ENCODE measurements at regions of chr1 and their contacts with region 1.

Region 1: DNA sequence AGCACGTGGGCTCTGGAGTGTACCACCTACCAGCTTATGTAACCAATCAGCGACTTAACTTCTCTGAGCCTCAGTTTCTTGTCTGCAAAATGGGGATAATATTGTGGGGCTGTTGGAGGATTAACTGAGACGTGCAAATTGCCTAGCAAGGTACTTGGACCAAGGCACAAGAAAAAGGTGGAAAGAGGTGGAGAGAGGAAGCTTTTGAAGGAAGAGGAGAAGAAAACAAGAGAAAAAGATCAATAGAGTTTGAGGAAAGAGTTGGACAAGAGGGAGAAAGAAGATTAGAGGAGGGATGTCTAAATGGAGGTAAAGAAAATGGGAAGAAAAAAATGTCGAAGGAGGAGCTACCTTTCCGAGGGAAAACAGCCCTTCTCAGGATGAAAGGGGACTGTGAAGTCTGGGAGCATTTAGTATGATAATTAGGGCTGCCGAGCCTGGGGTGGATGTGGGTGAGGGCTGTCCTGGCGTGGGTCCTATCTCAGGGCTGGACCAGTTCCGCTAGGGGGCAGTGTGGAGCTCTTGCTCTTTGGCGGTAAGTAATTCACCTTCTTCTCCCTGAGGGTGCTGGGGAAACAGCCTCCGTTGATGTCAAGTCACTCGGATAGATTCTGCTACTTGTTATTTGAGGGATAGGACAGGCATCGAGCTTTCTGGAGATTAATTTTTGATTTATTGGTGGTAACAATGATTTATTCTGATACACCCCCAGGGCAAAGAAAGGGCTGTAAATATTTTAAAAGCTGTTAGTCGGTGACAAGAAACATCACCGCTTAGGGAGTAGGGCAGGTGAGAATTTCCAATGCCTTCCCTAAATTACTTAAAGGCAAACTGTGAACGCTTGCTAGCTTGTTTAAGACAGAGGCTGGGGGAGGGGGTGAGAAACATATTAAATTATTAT is 79.0 kb upstream of the NFASC start:
- DNase-seq: peak; percentile 86
- H3K4me3 Mint-ChIP-seq: no peak overlapping the region
- H3K27ac Mint-ChIP-seq: no peak overlapping the region
- H3K4me1 Mint-ChIP-seq: no peaks in the 10 kb centered on the region
- H3K27me3 Mint-ChIP-seq: peaks cover 23% of the 10 kb centered on the region

Region 2: DNA sequence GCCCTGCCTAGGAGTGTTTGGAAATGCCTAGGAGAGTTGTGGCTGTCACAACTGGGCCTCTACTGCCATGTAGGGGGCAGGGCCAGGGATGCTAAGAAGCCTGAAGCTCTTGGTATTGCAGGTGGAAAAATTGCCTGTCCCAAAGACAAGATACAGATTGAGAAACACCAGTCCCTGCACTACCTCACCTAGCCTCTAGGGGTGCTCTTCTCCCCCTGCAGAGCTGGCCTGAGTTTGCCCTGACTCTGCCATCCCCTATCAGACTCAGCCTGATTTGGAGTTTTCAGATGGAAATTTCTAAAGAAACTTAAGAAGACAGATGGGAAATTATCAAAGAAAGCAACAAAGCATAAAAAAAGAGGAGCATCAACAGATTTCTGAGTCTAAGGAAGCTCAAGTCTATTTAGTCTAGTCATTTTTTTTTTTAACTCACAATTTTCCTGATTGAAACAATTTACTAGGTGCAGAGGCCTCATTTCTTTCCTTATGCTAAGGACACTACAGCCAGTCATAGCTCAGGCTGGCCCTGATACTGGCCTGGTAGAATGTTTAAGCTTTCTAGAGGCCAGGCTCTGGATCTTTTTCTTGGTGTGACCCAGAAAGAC is 44.8 kb before region 1 on chr1:
- CTCF ChIA-PET with region 1: interaction called, 10 read pairs
- POLR2A ChIA-PET with region 1: no interaction called
- intact Hi-C with region 1: no loop called
- DNase-seq: peak; percentile 62
- H3K4me3 Mint-ChIP-seq: no peak overlapping the region
- H3K27ac Mint-ChIP-seq: no peak overlapping the region
- H3K4me1 Mint-ChIP-seq: no peaks in the 10 kb centered on the region
- H3K27me3 Mint-ChIP-seq: peaks cover 23% of the 10 kb centered on the region

Region 3: DNA sequence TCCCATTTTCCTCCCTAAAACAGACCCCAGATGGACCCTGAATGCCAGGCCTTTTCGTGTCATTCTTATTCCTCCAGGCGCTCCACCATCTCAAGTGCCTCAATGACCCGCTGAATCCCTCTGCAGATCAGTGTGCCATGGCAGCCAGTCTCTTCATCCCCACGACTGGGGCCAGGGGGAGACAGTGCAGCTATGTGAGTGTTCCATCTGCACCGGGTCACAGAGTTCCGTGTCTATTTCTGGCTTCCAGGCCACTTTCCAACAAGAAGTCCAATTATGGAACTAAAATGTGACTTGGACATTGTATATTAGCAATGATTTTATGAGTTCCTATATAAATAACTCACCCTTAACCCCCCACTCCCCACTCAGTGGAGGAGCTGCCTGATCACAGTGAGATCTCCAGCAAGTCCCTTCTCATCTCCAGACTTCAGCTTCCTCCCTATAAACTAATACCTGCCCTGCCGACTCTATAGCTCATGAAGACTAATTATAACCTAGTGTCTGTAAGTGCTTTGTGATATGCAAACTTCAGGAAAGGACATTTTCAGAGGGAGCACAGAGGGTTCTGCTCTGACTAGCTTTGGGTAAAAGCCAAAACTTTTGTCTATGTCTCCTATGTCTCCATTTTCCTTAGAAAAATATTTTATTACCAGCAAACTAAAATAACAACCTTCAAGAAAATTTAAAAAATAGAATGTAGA is 22.6 kb after region 1 on chr1:
- CTCF ChIA-PET with region 1: interaction called, 16 read pairs
- POLR2A ChIA-PET with region 1: no interaction called
- intact Hi-C with region 1: no loop called
- DNase-seq: no peak
- H3K4me3 Mint-ChIP-seq: no peak overlapping the region
- H3K27ac Mint-ChIP-seq: no peak overlapping the region
- H3K4me1 Mint-ChIP-seq: no peaks in the 10 kb centered on the region
- H3K27me3 Mint-ChIP-seq: peaks cover 25% of the 10 kb centered on the region

Region 4: GRCh38 chr1:205255941-205256780 is 464.5 kb after region 1 on chr1:
- CTCF ChIA-PET with region 1: no interaction called
- POLR2A ChIA-PET with region 1: no interaction called
- intact Hi-C with region 1: no loop called
- DNase-seq: peak; percentile 92
- H3K4me3 Mint-ChIP-seq: no peak overlapping the region
- H3K27ac Mint-ChIP-seq: no peak overlapping the region
- H3K4me1 Mint-ChIP-seq: no peaks in the 10 kb centered on the region
- H3K27me3 Mint-ChIP-seq: peaks cover 4% of the 10 kb centered on the region

Measured in activated CD4-positive, alpha-beta memory T cell treated with anti-CD3 and anti-CD28 coated beads for 36 hours (primary cell).